HEK293 (cell line): ENCODE measurements at regions of chr12 and their contacts with region 1.

Region 1: DNA sequence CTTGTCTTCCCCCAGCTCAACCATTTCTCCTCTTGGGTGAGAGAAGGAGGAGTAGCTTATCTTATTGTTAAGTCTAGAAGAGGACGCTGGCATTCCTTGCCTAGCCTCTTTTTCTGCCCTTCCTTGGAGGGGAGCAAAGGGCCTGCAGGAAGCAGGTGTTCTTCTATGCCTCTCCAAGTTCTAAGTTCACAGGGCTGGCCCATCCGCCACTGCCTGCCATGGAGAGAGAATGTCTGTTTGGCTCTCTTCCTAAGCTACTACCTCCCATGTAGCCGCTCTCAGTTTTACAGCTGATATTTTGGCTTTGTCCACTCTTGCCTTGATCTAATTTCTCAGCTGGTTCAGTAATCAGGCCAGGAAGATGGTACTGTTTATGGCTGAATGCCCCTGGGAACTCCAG is 201.2 kb downstream of the NTF3 start:
- H3K4me3 ChIP-seq: no peak overlapping the region
- H3K27ac ChIP-seq: no peak overlapping the region
- H3K4me1 ChIP-seq: no peaks in the 10 kb centered on the region
- CTCF ChIP-seq: no peak

Region 2: GRCh38 chr12:5586201-5586600 is 46.9 kb before region 1 on chr12:
- CTCF ChIA-PET with region 1: no interaction called
- POLR2A ChIA-PET with region 1: no interaction called
- H3K4me3 ChIP-seq: no peak overlapping the region
- H3K27ac ChIP-seq: no peak overlapping the region
- H3K4me1 ChIP-seq: no peaks in the 10 kb centered on the region
- CTCF ChIP-seq: no peak

Region 3: DNA sequence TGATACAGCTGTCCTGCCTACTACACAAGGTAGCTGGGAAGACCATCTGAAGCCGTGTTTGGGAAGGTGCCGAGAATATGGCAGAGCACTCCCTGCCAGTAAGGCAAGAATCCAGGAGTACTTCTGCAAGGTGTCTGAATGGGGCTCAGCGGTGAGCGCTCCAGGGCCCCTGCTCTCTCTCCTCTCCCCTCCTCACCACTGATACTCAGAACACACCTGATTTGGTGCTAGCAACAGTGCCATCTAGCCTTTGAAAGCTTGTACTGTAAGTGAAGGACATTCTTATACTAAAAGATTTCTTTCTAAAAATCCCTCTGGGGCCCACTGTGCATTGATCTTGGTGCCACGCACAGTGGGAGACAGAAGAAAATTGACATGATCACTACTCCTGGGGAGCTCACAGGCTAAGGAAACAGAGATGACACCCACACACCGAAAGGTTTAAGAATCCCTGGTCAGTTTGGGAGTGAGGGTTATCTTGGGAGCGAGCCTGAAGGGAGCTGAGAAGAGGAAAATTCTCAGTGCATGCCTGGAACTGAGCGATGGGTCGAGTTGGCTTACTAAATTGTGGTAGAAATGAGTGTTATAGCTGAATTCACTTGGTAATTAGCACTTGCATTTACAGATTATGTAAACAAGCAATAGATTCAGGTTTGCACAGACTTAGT is 15.7 kb after region 1 on chr12:
- CTCF ChIA-PET with region 1: interaction called, 10 read pairs
- POLR2A ChIA-PET with region 1: no interaction called
- H3K4me3 ChIP-seq: no peak overlapping the region
- H3K27ac ChIP-seq: no peak overlapping the region
- H3K4me1 ChIP-seq: no peaks in the 10 kb centered on the region
- CTCF ChIP-seq: peak; percentile 17; the same call in 1 of the 2 replicates